ENCODE measurements at regions of chr9 and their contacts with region 1.

Region 1: DNA sequence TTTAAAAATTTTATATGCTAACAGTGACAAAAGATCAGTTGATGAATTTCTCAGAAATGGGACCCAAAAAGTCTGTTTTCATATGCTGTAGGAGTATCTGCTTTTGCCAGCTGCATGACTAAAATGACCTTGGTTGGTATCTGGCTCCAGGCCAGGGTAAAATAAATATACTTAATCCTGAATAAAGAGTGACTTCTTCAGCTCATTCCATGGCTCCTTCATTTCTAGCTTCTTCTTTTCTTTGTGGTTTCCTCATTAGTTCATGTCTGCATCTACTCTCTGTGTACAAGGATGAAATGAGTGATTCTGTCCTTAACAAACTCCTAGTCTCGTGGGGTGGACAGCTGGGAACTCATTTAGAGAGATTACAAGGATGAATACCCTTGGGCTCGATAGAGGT is 36.0 kb downstream of the RCL1 start:
- DNase-seq: no peak
- H3K4me3 ChIP-seq: no peak overlapping the region
- H3K27ac ChIP-seq: no peak overlapping the region
- H3K4me1 ChIP-seq: no peaks in the 10 kb centered on the region
- CTCF ChIP-seq: no peak

Region 2: GRCh38 chr9:4814913-4815312 is 13.8 kb before region 1 on chr9:
- CTCF ChIA-PET with region 1: no interaction called
- POLR2A ChIA-PET with region 1: interaction called, 15 read pairs
- intact Hi-C with region 1: no loop called
- DNase-seq: peak; percentile 25
- H3K4me3 ChIP-seq: peak overlapping the region; percentile 42
- H3K27ac ChIP-seq: peak overlapping the region; percentile 58
- H3K4me1 ChIP-seq: peaks cover 47% of the 10 kb centered on the region
- CTCF ChIP-seq: no peak

Region 3: GRCh38 chr9:5122116-5122910 is 293.6 kb after region 1 on chr9:
- CTCF ChIA-PET with region 1: no interaction called
- POLR2A ChIA-PET with region 1: no interaction called
- intact Hi-C with region 1: no loop called
- DNase-seq: no peak
- H3K4me3 ChIP-seq: no peak overlapping the region
- H3K27ac ChIP-seq: no peak overlapping the region
- H3K4me1 ChIP-seq: no peaks in the 10 kb centered on the region
- CTCF ChIP-seq: no peak

Measured in OCI-LY7 (cell line).